Sigmoid colon (tissue), 7 donors: ENCODE measurements at regions of chr2 and their contacts with region 1.

Region 1: GRCh38 chr2:23602116-23602515 is 217.1 kb downstream of the KLHL29 start:
- DNase-seq: peak; percentile 98
- H3K4me3 ChIP-seq: no peak overlapping the region
- H3K27ac ChIP-seq: peak overlapping the region; percentile 88 to 96 (median 94)
- H3K4me1 ChIP-seq: peaks cover 0 to 72% (median 41%) of the 10 kb centered on the region in 4 donors
- H3K27me3 ChIP-seq: no peaks in the 10 kb centered on the region
- CTCF ChIP-seq: no peak
- EP300 ChIP-seq: peak; percentile 90 to 99 (median 94)
- POLR2A ChIP-seq: peak in 1 of 2 donors; percentile 18

Region 2: DNA sequence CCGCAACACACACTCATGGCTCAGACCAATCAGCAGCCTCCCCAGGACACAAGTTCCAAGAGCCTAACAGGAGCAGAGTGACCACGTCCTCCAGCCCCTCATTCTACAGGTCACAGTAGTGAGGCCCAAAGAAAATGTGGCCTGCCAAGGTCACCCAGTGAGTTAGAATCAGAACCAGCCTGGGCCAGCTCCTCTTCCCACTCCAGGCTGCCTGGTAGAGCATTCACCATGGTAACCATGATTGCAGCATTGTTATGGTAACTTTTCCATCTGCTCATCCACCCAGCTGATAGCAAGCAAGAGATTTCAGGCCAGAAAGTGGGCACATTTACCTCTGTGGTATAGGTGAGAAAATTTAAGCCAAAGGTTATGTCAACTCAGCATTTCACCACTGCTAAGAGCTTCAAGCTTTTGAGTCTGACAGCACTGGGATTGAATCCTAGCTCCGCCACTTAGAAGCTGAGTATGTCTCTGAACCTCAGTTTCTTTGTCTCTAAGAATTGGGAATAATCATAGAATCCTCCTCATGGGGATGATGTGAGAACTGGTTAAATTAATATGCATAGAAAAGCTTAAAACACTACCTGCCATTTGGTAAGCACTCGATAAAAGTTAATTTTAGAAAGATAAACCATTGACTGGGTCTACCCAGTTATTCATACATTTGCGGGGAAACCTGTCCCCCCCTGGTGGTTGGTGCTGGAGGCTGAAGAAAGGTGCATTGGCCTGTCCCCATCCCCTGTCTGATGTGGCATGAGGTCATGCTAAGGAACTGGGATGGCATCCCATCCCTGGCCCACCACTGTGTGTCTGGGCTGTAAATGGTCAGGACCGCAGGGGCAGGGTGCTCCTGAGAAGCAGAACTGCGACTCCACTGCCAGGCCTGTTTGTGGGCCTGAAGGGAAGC is 35.6 kb before region 1 on chr2:
- intact Hi-C with region 1: loop called (anchors 5 kb)
- DNase-seq: no peak
- H3K4me3 ChIP-seq: no peak overlapping the region
- H3K27ac ChIP-seq: peak overlapping the region; percentile 73 to 85 (median 76)
- H3K4me1 ChIP-seq: peaks cover 0 to 92% (median 78%) of the 10 kb centered on the region in 4 donors
- H3K27me3 ChIP-seq: no peaks in the 10 kb centered on the region
- CTCF ChIP-seq: peak in 2 of 4 experiments; percentile 35 to 45
- EP300 ChIP-seq: no peak
- POLR2A ChIP-seq: no peak

Region 3: GRCh38 chr2:23803965-23804542 is 201.9 kb after region 1 on chr2:
- intact Hi-C with region 1: no loop called
- DNase-seq: no peak
- H3K4me3 ChIP-seq: no peak overlapping the region
- H3K27ac ChIP-seq: peak overlapping the region in 2 of 4 donors; percentile 4 to 18
- H3K4me1 ChIP-seq: peaks cover 0 to 27% (median 19%) of the 10 kb centered on the region in 4 donors
- H3K27me3 ChIP-seq: no peaks in the 10 kb centered on the region
- CTCF ChIP-seq: no peak
- EP300 ChIP-seq: no peak
- POLR2A ChIP-seq: no peak